Heart right ventricle (tissue), 16 donors: ENCODE measurements at regions of chr5 and their contacts with region 1.

Region 1: DNA sequence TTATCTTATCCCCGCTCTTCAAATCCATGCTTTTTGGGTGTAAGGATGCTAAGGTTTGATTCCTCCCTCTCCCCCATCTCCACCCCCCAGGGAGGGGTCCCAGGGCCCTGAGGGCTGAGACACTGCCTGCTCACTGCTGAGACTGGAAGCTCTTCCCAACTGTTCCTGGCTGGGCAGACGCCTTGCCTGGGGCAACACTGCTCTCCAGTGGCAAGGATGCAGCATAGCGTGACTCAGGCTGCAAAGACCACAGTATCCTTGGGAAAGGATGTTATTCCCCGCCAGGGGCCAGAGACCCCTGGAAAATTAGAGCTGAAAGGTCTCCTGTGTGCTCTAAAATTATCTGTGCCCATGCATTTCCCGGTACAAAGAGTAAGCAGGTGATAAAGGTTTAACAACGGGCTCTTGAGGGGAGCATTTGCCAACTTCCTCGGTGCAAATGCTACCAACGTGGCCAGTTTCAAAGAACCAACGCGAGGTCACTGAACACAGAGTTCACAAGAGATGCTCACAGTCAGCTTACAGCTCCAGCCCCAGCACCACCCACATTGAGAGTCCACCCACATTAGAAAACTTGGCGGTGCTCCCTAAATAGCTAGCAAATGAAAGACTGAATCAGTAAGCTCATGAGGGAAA is 271.9 kb downstream of the NSG2 start:
- DNase-seq: peak in 1 of 2 donors; percentile 30
- ATAC-seq: peak; percentile 80 to 90 (median 86)
- H3K4me3 ChIP-seq: no peak overlapping the region
- H3K27ac ChIP-seq: no peak overlapping the region
- H3K4me1 ChIP-seq: peaks cover 0 to 4% (median 2%) of the 10 kb centered on the region in 9 donors
- H3K27me3 ChIP-seq: peaks cover 0 to 53% (median 34%) of the 10 kb centered on the region in 7 donors
- CTCF ChIP-seq: peak; percentile 28 to 80 (median 77)

Region 2: DNA sequence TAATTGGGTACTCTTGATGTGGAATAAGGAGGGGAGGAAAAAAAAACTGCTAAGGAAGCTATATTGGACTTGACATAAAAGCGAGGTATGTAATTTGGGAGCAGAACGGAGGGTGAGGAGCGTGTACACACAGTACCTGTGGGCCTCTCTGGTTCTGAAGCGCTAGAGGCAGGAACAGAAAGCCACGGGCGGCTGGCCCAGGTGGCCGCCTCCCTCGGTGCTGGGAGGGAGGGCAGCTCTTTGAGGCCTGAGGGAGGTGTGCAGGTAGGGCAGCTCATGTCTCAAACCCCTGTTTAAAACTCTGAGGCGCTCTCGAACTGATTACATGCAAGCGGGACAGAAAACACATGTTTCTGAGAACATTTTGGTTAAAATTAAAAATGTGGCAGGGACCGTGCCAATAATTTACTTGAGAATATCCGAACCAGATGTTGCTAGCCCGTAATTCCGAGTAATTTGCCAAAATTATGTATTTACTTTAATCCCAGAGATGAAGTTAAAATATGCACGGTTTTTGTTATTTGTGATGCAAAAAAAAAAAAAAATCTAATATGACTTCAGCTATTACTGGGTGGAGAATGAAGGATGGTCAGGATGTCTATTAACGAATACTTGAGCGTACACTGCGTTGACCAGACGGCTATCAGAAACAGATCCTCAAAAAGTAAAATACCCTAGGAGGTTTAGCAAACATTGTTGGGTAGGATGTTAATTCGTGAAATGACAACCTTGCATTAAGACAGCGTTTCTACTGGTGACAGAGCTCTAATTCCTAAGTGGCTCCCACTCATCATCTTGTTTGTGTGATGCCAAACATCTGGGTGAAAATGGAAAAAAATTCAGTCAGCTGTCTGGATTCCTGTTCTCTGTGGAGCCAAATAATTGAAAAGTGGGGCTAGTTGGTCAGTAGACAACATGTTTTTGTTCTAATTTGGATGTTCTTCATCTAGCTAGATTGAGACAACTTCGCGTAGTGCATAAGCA is 964.7 kb before region 1 on chr5:
- intact Hi-C with region 1: no loop called
- DNase-seq: no peak
- ATAC-seq: peak in 4 of 8 donors; percentile 24 to 55 (median 42)
- H3K4me3 ChIP-seq: no peak overlapping the region
- H3K27ac ChIP-seq: no peak overlapping the region
- H3K4me1 ChIP-seq: peaks cover 0 to 7% (median 0%) of the 10 kb centered on the region in 9 donors
- H3K27me3 ChIP-seq: peaks cover 0 to 5% (median 0%) of the 10 kb centered on the region in 7 donors
- CTCF ChIP-seq: no peak

Region 3: GRCh38 chr5:173997331-173997730 is 320.0 kb before region 1 on chr5:
- intact Hi-C with region 1: no loop called
- DNase-seq: no peak
- ATAC-seq: no peak
- H3K4me3 ChIP-seq: no peak overlapping the region
- H3K27ac ChIP-seq: no peak overlapping the region
- H3K4me1 ChIP-seq: no peaks in the 10 kb centered on the region
- H3K27me3 ChIP-seq: peaks cover 0 to 39% (median 4%) of the 10 kb centered on the region in 7 donors
- CTCF ChIP-seq: no peak

Region 4: DNA sequence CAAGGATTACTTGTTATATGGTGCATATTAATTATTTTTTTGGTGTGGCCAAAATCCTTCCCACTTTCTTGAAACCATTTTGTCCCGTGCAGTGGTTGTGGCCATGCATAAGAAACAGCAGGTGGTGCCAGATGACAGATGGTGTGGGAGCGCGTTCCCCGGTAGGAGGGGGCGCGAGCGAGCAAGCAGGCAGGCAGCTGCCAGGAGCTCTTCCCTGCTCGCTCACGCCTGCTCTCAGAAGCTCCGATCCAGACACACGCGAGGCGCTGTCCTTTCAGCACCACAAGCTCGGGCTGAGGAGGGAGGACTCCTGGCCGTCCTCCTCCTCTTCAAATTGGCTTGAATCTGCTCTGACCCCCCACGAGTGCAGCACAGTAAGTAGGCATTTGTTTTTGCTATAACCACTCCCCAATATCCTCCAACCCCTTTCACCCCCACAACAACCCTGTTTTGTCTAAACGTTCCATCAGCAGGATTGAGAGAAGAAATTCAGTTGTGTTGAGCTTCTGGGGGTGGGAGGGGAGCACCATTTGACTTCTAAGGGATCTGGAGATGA is 271.8 kb before region 1 on chr5 and contains the start of gene NSG2:
- intact Hi-C with region 1: loop called in 9 of 10 experiments (anchors 1 to 5 kb)
- DNase-seq: peak; percentile 77 to 79
- ATAC-seq: peak; percentile 92 to 100 (median 98)
- H3K4me3 ChIP-seq: no peak within 1 kb of the TSS
- H3K27ac ChIP-seq: no peak within 1 kb of the TSS
- H3K4me1 ChIP-seq: no peaks in the 10 kb centered on the region
- H3K27me3 ChIP-seq: peaks cover 0 to 13% (median 6%) of the 10 kb centered on the region in 7 donors
- CTCF ChIP-seq: peak; percentile 34 to 81 (median 69)
- total RNA-seq, gene NSG2: 0.11 to 0.82 (median 0.32) TPM in 8 of 10 donors, not detected in the others

Region 5: DNA sequence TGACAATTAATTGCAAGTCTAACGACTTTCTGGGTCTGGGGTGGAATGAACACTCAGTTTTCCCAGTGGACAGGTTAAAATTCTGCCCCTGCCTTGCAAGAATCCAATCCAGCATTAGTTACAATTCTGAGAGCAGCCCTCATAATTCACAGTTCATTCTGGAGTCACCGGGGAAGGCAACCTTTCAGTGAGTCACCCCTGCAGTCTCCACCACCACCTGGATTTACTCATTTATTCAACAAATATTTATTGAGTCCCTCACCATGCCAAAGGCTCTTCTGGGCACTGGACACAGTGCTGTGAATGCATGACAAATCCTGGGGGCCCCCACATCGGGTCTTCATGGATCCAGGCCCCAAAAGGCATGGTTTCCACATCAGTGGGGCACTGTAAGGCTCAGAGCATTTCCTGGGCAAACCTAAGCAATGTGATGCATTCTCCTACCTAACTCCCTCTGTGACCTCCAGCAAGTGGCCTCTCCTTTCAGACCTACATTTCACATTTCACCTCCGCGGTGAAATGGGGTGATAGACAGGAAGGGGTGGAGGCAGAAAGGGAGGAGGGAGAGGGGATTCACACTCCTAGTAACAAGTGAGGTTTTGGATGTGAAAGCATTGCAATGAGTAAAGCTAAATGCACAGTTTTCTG is 400.6 kb after region 1 on chr5:
- intact Hi-C with region 1: no loop called
- DNase-seq: no peak
- ATAC-seq: no peak
- H3K4me3 ChIP-seq: no peak overlapping the region
- H3K27ac ChIP-seq: no peak overlapping the region
- H3K4me1 ChIP-seq: peaks cover 0 to 10% (median 3%) of the 10 kb centered on the region in 9 donors
- H3K27me3 ChIP-seq: peaks cover 15 to 100% (median 94%) of the 10 kb centered on the region in 7 donors
- CTCF ChIP-seq: no peak